A549 (cell line): ENCODE measurements at regions of chr6 and their contacts with region 1.

Region 1: GRCh38 chr6:41705996-41706835 is 29.2 kb downstream of the TFEB start:
- DNase-seq: peak; percentile 69 to 78
- ATAC-seq: peak; percentile 90 to 96
- H3K4me3 ChIP-seq: no peak overlapping the region
- H3K27ac ChIP-seq: peak overlapping the region; percentile 85 to 97
- H3K4me1 ChIP-seq: peaks cover 32% of the 10 kb centered on the region
- CTCF ChIP-seq: peak; percentile 66
- EP300 ChIP-seq: no peak
- POLR2A ChIP-seq: no peak
- RAD21 ChIP-seq: peak; percentile 61 to 66

Region 2: DNA sequence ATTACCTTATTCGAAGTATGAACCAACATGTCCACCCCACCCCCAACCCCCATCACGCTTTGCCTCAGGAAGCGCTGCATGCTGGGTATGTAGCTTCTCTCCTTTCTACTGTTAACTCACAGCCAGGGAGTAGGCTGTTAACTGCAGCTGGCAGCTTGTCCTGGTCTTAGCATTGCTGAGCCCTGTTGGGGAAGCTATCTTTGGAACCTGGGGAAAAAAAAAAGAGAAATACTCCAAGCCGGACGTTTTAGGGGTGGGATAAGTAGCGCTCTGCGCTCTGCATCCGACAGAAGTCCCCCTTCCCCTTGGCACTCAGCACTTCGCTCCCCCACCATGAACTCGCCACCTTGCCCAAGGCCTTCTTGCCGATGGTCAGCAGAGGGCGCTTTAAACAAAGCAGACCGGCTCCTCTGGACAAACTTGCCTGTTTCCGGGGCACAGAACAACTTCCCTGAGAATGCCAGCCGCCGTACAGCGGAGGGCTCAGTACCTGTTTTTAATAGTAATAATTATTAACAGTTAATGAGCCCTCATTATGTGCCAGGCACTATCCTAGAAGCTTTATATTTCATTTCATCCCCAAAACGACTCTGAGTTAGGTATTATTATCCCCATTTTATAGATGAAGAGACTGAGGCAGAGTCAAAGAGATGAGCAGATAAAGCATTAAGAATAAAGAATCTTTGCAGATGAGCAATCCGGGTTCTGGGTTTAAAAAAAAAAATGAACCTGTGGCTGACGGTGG is 103.2 kb before region 1 on chr6:
- CTCF ChIA-PET with region 1: interaction called, 12 read pairs
- POLR2A ChIA-PET with region 1: no interaction called
- DNase-seq: peak; percentile 68 to 80
- ATAC-seq: peak; percentile 83 to 87
- H3K4me3 ChIP-seq: peak overlapping the region; percentile 23; the same call in 1 of the 3 replicates
- H3K27ac ChIP-seq: peak overlapping the region; percentile 59 to 80; a peak in 5 of 6 replicates
- H3K4me1 ChIP-seq: peaks cover 4% of the 10 kb centered on the region; the same call in 1 of the 3 replicates
- CTCF ChIP-seq: peak; percentile 79
- EP300 ChIP-seq: no peak
- POLR2A ChIP-seq: no peak
- RAD21 ChIP-seq: peak; percentile 82 to 83

Region 3: GRCh38 chr6:41694815-41695526 is 11.2 kb before region 1 on chr6:
- CTCF ChIA-PET with region 1: interaction called, 66 read pairs
- POLR2A ChIA-PET with region 1: no interaction called
- DNase-seq: no peak
- ATAC-seq: peak; percentile 33 to 46; a peak in 2 of 6 replicates
- H3K4me3 ChIP-seq: no peak overlapping the region
- H3K27ac ChIP-seq: no peak overlapping the region
- H3K4me1 ChIP-seq: no peaks in the 10 kb centered on the region
- CTCF ChIP-seq: no peak
- EP300 ChIP-seq: no peak
- POLR2A ChIP-seq: no peak
- RAD21 ChIP-seq: no peak

Region 4: GRCh38 chr6:41735427-41736356 is 29.5 kb after region 1 on chr6 and contains the start of gene TFEB:
- CTCF ChIA-PET with region 1: interaction called, 65 read pairs
- POLR2A ChIA-PET with region 1: interaction called, 12 read pairs
- DNase-seq: peak; percentile 77 to 86
- ATAC-seq: peak; percentile 63 to 72
- H3K4me3 ChIP-seq: peak within 1 kb of the TSS; percentile 90
- H3K27ac ChIP-seq: peak within 1 kb of the TSS; percentile 95 to 99
- H3K4me1 ChIP-seq: peaks cover 32% of the 10 kb centered on the region
- CTCF ChIP-seq: peak; percentile 81
- EP300 ChIP-seq: no peak
- POLR2A ChIP-seq: no peak
- RAD21 ChIP-seq: peak; percentile 37 to 59
- polyA plus RNA-seq, gene TFEB: 2.9 and 3.1 TPM in 2 replicates

Region 5: GRCh38 chr6:41775293-41776181 is 69.3 kb after region 1 on chr6:
- CTCF ChIA-PET with region 1: interaction called, 49 read pairs
- POLR2A ChIA-PET with region 1: interaction called, 4 read pairs
- DNase-seq: peak; percentile 74 to 82
- ATAC-seq: peak; percentile 52 to 74; a peak in 5 of 6 replicates
- H3K4me3 ChIP-seq: no peak overlapping the region
- H3K27ac ChIP-seq: no peak overlapping the region
- H3K4me1 ChIP-seq: peaks cover 7% of the 10 kb centered on the region; the same call in 2 of the 3 replicates
- CTCF ChIP-seq: peak; percentile 66
- EP300 ChIP-seq: no peak
- POLR2A ChIP-seq: no peak
- RAD21 ChIP-seq: peak; percentile 70 to 84

Region 6: DNA sequence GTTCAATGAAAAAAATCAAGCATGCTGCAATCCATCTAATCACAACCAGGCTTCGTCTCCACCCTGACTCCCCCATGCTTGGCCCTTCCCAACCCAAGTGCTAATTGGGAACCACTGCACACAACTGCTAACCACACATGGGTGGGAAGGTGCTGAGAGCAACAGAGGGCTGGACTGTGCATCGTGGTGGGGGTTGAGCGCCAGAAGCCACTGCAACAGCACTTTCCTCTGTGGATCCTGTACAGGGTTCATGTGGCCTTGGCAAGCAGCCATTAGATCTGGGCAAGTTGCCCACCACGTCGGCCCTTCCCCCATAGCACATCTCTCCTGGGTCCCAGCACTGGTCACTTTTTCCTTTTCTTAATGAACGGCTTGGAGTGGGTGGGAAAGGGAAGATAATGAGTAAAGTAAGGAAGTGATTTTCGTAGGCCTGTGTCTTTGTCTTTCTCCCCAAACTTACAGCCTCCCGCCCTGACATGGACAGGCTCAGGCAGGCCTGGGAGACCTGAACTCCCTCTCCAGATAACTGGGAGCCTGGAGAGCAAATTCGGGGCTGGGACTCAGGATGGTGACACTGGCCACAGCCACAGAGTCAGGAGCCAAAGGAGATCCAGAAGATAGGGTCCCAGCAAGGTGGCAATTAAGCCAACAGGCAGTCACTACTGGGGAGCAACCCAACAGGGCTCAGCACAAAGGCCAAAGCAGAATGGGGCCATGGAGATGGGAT is 545.9 kb after region 1 on chr6:
- CTCF ChIA-PET with region 1: no interaction called
- POLR2A ChIA-PET with region 1: no interaction called
- DNase-seq: no peak
- ATAC-seq: no peak
- H3K4me3 ChIP-seq: no peak overlapping the region
- H3K27ac ChIP-seq: peak overlapping the region in 1 of 2 experiments; percentile 41; a peak in 2 of 6 replicates
- H3K4me1 ChIP-seq: peaks cover 11% of the 10 kb centered on the region; the same call in 2 of the 3 replicates
- CTCF ChIP-seq: no peak
- EP300 ChIP-seq: no peak
- POLR2A ChIP-seq: no peak
- RAD21 ChIP-seq: no peak